ENCODE measurements at regions of chr5 and their contacts with region 1.

Region 1: GRCh38 chr5:77086689-77087483 is at the start of gene ZBED3:
- DNase-seq: peak; percentile 27 to 84
- H3K4me3 ChIP-seq: peak within 1 kb of the TSS; percentile 65 to 86
- H3K27ac ChIP-seq: peak within 1 kb of the TSS; percentile 90 to 93
- H3K4me1 ChIP-seq: peaks cover 0 to 8% of the 10 kb centered on the region in 2 donors
- H3K27me3 ChIP-seq: no peaks in the 10 kb centered on the region
- CTCF ChIP-seq: peak in 1 of 3 experiments; percentile 14
- total RNA-seq, gene ZBED3: 0.64 TPM

Region 2: GRCh38 chr5:77030097-77031071 is 56.5 kb before region 1 on chr5 and contains the start of gene AGGF1:
- intact Hi-C with region 1: loop called (anchors 2 kb)
- DNase-seq: peak; percentile 71 to 96
- H3K4me3 ChIP-seq: peak within 1 kb of the TSS; percentile 71 to 91
- H3K27ac ChIP-seq: peak within 1 kb of the TSS; percentile 82 to 96
- H3K4me1 ChIP-seq: peaks cover 0 to 11% of the 10 kb centered on the region in 2 donors
- H3K27me3 ChIP-seq: no peaks in the 10 kb centered on the region
- CTCF ChIP-seq: no peak
- total RNA-seq, gene AGGF1: 60.3 TPM

Region 3: DNA sequence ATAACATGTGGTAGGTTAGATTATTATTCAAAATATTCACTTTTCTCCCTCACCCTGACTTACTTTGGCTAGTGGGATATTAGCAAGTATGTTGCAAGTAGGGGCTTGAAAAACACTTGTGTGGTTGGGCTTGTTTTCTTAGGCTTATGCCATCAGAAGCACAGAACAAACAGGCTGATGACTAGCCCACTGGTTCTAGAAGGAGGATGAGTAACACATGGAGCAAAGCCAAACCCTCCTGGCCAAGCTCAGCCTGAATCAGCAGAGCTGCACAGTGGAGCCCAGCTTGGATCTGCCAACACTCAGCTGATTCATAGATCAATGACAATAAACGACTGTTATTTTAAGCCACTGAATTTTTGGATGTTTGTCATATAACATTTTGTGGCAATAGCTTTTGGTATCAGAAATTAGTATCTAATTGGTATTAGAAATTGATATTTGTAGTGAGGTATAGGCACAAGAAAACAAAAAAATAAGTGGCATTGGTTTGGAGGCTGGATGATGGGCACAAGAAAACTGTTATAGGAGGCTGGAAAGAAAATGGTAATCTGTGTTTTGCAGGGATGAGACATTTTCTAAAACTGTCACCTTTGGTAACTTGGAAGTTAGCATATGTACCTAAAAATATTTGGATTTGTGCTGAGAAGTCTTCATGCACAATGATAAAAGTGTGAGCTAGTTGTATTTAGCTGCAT is 46.3 kb after region 1 on chr5:
- intact Hi-C with region 1: loop called (anchors 2 kb)
- DNase-seq: peak; percentile 13 to 91
- H3K4me3 ChIP-seq: no peak overlapping the region
- H3K27ac ChIP-seq: no peak overlapping the region
- H3K4me1 ChIP-seq: no peaks in the 10 kb centered on the region
- H3K27me3 ChIP-seq: no peaks in the 10 kb centered on the region
- CTCF ChIP-seq: no peak

Region 4: GRCh38 chr5:77168161-77168875 is 81.4 kb after region 1 on chr5:
- intact Hi-C with region 1: no loop called
- DNase-seq: peak; percentile 16 to 85
- H3K4me3 ChIP-seq: peak overlapping the region in 1 of 2 donors; percentile 12
- H3K27ac ChIP-seq: peak overlapping the region; percentile 15 to 21
- H3K4me1 ChIP-seq: peaks cover 0 to 25% of the 10 kb centered on the region in 2 donors
- H3K27me3 ChIP-seq: no peaks in the 10 kb centered on the region
- CTCF ChIP-seq: no peak

Region 5: GRCh38 chr5:77437194-77437593 is 350.3 kb after region 1 on chr5:
- intact Hi-C with region 1: loop called (anchors 5 kb)
- DNase-seq: no peak
- H3K4me3 ChIP-seq: no peak overlapping the region
- H3K27ac ChIP-seq: no peak overlapping the region
- H3K4me1 ChIP-seq: no peaks in the 10 kb centered on the region
- H3K27me3 ChIP-seq: no peaks in the 10 kb centered on the region
- CTCF ChIP-seq: peak in 2 of 3 experiments; percentile 32 to 57